ENCODE measurements at regions of chr7 and their contacts with region 1.

Region 1: DNA sequence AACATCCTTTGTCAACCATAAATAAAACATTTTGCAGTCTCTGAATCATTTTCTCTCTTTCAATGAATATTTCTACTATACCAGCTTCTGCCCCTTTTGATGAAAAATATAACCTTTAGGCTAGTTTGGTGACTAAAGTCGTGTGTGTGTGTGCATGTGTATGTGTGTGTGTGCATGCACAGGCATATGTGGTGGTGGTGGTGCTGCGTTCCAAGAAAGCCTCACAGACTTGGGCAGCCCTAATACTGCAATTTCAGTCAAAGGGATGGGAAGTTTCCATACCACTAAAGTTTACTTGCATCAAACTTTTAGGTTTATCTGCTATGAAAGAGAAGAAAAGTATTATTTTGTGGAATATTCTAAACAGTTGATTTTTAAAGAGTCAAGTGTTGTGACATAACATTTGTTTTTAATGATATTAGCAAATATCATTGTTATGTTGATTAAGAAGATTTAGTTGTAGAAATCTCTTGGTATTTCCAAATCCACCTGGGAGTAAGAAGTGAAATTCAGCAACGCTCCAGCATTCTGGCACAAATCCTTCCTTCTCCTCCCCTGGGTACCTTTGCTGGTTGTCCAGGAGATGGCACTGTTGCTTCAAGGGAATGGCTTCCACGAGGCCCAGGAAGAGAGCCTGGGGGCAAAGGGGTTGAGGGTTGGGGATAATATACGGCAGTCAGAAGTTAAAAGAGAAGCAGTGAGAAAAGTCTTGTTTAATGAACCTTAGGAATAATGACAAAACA is 41.5 kb downstream of the ASB4 start:
- DNase-seq: peak; percentile 71 to 74
- H3K4me3 ChIP-seq: no peak overlapping the region
- H3K4me3 Mint-ChIP-seq: no peak overlapping the region
- H3K27ac Mint-ChIP-seq: no peak overlapping the region
- H3K4me1 ChIP-seq: no peaks in the 10 kb centered on the region
- H3K4me1 Mint-ChIP-seq: no peaks in the 10 kb centered on the region
- H3K27me3 ChIP-seq: no peaks in the 10 kb centered on the region
- H3K27me3 Mint-ChIP-seq: peaks cover 4% of the 10 kb centered on the region
- CTCF ChIP-seq: peak; percentile 84 to 93

Region 2: DNA sequence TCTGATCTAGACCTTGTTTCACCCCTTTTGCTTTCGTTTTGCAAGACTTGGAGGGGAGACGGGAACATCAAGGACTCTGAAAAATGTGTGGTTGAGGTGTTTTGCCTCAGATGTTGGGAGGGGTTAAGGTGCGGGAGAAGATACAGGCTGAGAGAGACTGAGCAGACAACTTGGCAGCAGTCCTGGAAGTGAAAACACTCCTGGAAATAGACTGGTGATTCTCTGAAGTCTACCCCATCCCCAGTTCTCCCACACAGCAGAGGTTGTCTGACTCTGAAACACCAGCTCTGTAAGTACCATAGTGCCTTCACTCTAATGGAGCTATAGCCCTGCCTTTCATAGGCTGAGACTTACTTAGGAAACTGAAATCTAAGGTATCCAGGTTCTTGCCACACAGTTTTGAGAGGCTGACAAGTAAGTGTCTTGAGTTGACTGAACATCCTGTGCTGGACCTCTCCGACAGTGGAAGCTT is 467.3 kb before region 1 on chr7:
- CTCF ChIA-PET with region 1: no interaction called
- POLR2A ChIA-PET with region 1: no interaction called
- intact Hi-C with region 1: no loop called
- DNase-seq: no peak
- H3K4me3 ChIP-seq: no peak overlapping the region
- H3K4me3 Mint-ChIP-seq: no peak overlapping the region
- H3K27ac Mint-ChIP-seq: no peak overlapping the region
- H3K4me1 ChIP-seq: no peaks in the 10 kb centered on the region
- H3K4me1 Mint-ChIP-seq: no peaks in the 10 kb centered on the region
- H3K27me3 ChIP-seq: no peaks in the 10 kb centered on the region
- H3K27me3 Mint-ChIP-seq: no peaks in the 10 kb centered on the region
- CTCF ChIP-seq: no peak

Region 3: GRCh38 chr7:95511716-95512260 is 15.4 kb before region 1 on chr7:
- CTCF ChIA-PET with region 1: interaction called, 6 read pairs
- POLR2A ChIA-PET with region 1: no interaction called
- intact Hi-C with region 1: loop called (anchors 1 kb)
- DNase-seq: peak; percentile 65 to 75
- H3K4me3 ChIP-seq: no peak overlapping the region
- H3K4me3 Mint-ChIP-seq: no peak overlapping the region
- H3K27ac Mint-ChIP-seq: no peak overlapping the region
- H3K4me1 ChIP-seq: no peaks in the 10 kb centered on the region
- H3K4me1 Mint-ChIP-seq: no peaks in the 10 kb centered on the region
- H3K27me3 ChIP-seq: no peaks in the 10 kb centered on the region
- H3K27me3 Mint-ChIP-seq: peaks cover 9% of the 10 kb centered on the region
- CTCF ChIP-seq: peak; percentile 83 to 84